ENCODE measurements at regions of chr9 and their contacts with region 1.

Region 1: GRCh38 chr9:34989003-34989945 is at the start of gene DNAJB5:
- H3K4me3 ChIP-seq: peak within 1 kb of the TSS; percentile 76
- H3K27ac ChIP-seq: no peak within 1 kb of the TSS; the same call in 1 of the 2 replicates
- H3K4me1 ChIP-seq: peaks cover 2% of the 10 kb centered on the region; the same call in 1 of the 2 replicates
- CTCF ChIP-seq: no peak

Region 2: DNA sequence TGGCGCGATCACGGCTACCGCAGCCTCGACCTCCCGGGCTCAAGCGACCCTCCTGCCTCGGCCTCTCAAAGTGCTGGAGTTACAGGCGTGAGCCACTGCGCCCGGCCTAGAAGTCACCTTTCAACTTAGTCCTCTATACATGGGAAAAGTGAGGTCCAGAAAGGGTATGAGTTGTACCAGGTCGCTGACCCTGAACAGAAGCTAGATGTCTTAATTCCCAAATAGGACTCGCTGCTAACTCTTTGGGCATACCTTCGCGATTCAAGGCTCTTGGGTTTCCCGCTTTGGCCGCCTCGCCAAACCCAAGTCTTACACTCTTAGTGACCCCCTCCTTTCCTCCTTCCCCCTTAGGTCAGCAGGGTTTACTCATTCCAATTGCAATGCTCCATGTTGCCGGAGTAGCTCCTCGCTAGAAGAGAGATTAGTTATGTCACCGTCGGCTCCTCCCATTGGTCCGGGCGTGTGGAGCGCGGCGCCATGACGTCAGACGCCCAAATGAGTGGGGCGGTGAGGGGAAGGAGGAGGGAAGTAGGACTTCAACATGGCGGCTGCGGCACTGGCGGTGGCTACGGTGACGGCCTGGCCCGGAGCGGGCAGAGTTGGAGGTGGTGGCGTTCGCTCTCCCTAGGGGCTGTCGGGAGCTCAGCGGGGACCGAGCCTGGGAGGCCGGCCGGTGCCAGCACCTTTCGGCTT is 810.6 kb before region 1 on chr9 and contains the start of gene UBAP1:
- CTCF ChIA-PET with region 1: no interaction called
- POLR2A ChIA-PET with region 1: no interaction called
- H3K4me3 ChIP-seq: peak within 1 kb of the TSS; percentile 85
- H3K27ac ChIP-seq: peak within 1 kb of the TSS; percentile 90
- H3K4me1 ChIP-seq: no peaks in the 10 kb centered on the region
- CTCF ChIP-seq: no peak

Region 3: DNA sequence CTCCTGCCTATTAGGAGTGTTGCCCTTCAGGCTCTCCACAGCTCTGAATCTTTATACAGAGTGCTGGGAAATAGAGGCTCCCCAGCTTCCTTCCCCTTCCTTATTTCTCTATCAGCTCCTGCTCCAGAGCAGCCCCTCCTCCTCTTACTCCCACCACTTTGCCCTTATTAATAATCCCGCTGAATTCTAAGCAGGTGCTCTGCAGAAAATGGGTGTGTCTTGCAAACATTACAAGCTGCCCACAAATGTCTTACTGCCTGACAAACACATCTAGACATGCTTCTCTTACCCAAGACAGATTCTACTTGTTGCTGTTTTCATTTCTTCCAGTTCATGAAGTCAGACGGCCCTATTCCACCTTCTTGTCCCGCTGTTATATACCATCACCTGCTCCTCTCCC is 24.8 kb before region 1 on chr9:
- CTCF ChIA-PET with region 1: interaction called, 18 read pairs
- POLR2A ChIA-PET with region 1: no interaction called
- H3K4me3 ChIP-seq: no peak overlapping the region
- H3K27ac ChIP-seq: no peak overlapping the region
- H3K4me1 ChIP-seq: no peaks in the 10 kb centered on the region
- CTCF ChIP-seq: no peak

Region 4: GRCh38 chr9:34971146-34971811 is 18.0 kb before region 1 on chr9:
- CTCF ChIA-PET with region 1: interaction called, 18 read pairs
- POLR2A ChIA-PET with region 1: no interaction called
- H3K4me3 ChIP-seq: no peak overlapping the region
- H3K27ac ChIP-seq: no peak overlapping the region
- H3K4me1 ChIP-seq: no peaks in the 10 kb centered on the region
- CTCF ChIP-seq: no peak

Measured in HEK293 (cell line).